ENCODE measurements at regions of chr10 and their contacts with region 1.

Region 1: DNA sequence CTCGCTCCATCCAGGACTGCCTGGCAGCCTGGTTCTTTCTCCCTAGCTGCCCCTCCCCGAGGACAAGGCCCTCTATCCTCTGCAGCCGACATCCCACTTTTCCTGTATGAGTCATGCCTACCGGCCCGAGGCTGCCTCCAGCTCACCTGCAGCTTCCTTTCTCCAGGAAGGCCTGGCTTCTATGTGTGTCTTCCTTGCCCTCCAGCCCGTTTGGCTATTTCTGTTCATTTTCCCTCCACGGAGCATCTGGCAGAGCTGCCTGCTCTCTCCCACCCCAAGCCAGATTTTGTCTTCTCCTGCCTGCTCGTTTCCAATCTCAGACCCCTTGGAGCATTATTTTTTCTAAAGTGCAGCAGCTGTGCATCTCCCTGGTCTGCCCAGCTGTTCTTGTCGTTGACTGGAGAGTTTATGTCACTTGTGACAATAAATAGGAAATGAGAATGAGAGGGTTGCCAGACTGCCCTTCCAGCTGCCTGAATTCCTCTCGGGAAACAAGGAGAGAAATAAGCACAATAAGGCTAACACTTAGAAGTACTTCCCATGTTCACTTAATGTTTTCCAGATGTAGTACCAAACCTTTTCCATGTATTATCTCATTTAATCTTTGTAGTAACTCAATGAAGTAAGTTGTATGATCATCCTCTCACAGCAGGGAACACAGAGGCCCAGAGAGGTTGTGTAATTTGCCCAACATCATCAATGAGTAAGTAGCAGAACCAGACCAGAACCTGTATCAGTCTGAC is 19.7 kb downstream of the UBTD1 start:
- DNase-seq: no peak
- H3K4me3 ChIP-seq: no peak overlapping the region
- H3K27ac ChIP-seq: no peak overlapping the region
- H3K4me1 ChIP-seq: no peaks in the 10 kb centered on the region
- CTCF ChIP-seq: no peak

Region 2: DNA sequence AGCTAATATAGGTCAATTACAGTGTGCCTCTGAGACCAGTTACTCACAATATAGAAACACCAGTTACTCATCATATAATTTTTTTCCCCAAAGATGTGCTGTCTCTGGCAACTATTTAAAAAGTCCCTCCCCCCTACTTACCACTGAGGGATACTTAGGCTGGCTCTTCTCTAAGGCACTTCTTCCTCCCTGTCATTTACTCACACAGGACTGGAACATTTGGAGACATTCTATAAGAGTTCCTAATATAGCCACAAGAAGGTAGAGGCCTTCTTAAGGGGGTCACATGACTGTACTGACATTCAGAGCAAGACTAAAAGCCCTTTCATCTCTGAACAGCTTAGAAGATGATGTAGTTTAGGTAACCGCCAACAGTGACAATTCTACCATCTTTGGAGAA is 288.3 kb before region 1 on chr10:
- CTCF ChIA-PET with region 1: no interaction called
- POLR2A ChIA-PET with region 1: no interaction called
- intact Hi-C with region 1: no loop called
- DNase-seq: no peak
- H3K4me3 ChIP-seq: no peak overlapping the region
- H3K27ac ChIP-seq: no peak overlapping the region
- H3K4me1 ChIP-seq: no peaks in the 10 kb centered on the region
- CTCF ChIP-seq: no peak

Region 3: GRCh38 chr10:97243836-97244235 is 274.6 kb before region 1 on chr10:
- CTCF ChIA-PET with region 1: no interaction called
- POLR2A ChIA-PET with region 1: interaction called, 11 read pairs
- intact Hi-C with region 1: no loop called
- DNase-seq: no peak
- H3K4me3 ChIP-seq: no peak overlapping the region
- H3K27ac ChIP-seq: no peak overlapping the region
- H3K4me1 ChIP-seq: no peaks in the 10 kb centered on the region
- CTCF ChIP-seq: no peak